Colonic mucosa (tissue), 4 donors: ENCODE measurements at regions of chr12 and their contacts with region 1.

Region 1: DNA sequence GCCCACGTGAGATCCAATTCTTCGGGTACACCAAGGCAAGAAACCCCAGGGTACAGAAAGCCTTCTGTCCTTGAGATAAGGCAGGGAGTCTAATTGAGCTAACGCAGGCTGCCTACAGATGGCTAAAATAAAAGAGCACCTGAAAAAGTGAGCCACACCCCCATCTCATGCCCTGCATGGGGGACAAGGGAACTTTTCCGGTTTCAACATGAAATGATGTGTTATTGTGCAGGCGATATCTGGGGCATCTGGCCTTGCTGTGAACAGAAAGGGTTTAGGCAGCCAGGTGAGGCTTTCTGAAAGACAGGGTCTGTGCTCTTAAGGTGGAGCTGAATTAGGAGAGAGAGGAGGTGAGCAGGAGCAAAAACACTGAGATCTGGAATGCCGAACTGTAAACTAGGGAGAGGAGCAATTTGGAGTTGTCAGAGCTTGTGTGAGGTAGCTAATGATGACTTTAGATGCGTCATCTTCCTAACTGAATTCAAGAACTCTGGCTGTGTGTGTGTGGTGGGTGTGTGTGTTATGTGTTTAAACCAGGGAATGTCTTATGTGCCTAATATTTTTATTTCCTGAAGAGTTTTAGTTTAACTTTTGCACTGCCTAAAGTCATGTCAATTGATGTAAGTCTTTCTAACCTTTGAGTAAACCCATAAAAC is 20.1 kb upstream of the LDHB start:
- DNase-seq: no peak
- H3K4me3 ChIP-seq: no peak overlapping the region
- H3K27ac ChIP-seq: no peak overlapping the region
- H3K4me1 ChIP-seq: no peaks in the 10 kb centered on the region
- H3K27me3 ChIP-seq: no peaks in the 10 kb centered on the region
- CTCF ChIP-seq: no peak

Region 2: DNA sequence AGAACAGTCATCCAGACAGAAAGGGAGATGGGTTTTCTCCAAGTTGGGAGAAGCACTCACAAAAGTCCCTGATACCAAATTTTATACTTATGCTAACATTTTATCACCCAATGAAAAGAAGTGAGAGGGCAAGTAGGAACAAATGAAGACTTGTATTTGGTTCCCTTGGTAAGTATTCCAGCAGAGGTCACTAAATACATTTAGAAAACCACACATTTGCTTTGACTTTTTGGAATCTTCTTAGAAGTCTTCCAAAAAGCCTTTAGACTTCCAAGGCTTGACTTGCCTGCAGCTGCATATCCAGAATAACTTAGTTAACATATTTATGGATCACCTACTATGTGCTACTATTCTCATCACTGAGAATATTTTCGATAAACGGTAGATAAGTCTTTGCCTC is 70.0 kb before region 1 on chr12:
- intact Hi-C with region 1: loop called (anchors 2 kb)
- DNase-seq: no peak
- H3K4me3 ChIP-seq: no peak overlapping the region
- H3K27ac ChIP-seq: no peak overlapping the region
- H3K4me1 ChIP-seq: no peaks in the 10 kb centered on the region
- H3K27me3 ChIP-seq: no peaks in the 10 kb centered on the region
- CTCF ChIP-seq: peak; percentile 21